ENCODE measurements at regions of chr7 and their contacts with region 1.

Region 1: DNA sequence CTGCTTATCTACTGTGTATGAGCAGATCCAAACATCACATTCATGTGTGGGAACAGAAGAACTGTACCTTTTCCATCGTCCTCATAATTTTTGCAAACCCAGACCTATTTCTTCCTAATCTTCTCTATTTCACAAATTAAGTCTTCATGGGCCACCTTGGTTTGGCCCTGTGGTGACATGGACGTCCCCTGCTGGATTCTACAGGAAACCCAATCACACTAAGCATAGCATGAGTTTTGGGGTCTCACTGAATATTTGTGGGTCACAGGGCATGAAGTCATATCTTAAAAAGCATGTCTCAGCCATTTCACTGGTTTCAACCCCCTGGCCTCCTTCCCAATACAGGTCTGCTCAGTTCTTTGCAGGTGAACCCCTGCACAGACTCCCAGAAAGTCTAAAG is 35.8 kb upstream of the CDCA7L start:
- DNase-seq: no peak
- ATAC-seq: no peak
- H3K4me3 ChIP-seq: no peak overlapping the region
- H3K27ac ChIP-seq: no peak overlapping the region
- H3K4me1 ChIP-seq: no peaks in the 10 kb centered on the region
- H3K27me3 ChIP-seq: peaks cover 1% of the 10 kb centered on the region
- CTCF ChIP-seq: no peak
- POLR2A ChIP-seq: no peak
- RAD21 ChIP-seq: no peak

Region 2: DNA sequence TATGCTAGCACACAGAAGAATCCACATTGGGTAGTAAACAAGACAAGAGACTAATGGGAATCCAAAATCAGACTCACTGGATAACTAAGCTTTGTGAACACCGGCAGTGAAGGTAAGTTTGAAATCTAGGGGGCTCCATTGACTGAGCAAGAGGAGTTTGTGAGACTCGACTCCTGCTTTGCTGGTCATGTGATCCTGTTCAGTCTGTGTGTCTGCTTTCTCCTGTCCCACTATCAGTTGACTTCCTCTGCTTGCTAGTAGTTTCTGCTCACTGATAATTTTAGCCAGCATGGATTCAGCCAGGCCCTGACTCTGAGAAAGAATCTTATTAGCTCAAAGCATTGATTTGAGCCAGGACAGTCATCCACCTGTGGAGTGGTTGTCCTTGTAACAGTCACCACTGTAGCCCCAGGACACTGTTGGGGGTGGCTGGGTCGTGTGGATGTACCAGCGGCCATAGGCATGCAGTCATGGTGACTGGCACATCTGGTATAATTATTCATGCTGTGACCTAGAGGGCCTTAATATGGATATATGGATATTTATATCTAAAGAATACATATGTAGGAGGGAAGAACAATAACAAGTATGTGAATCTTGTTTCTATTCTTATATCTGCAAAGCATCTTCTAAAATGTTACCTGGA is 394.3 kb before region 1 on chr7:
- CTCF ChIA-PET with region 1: interaction called, 10 read pairs
- POLR2A ChIA-PET with region 1: no interaction called
- dilution Hi-C with region 1: no loop called
- in situ Hi-C with region 1: no loop called
- intact Hi-C with region 1: no loop called
- DNase-seq: no peak
- ATAC-seq: no peak
- H3K4me3 ChIP-seq: no peak overlapping the region
- H3K27ac ChIP-seq: no peak overlapping the region
- H3K4me1 ChIP-seq: no peaks in the 10 kb centered on the region
- H3K27me3 ChIP-seq: no peaks in the 10 kb centered on the region
- CTCF ChIP-seq: no peak
- POLR2A ChIP-seq: no peak
- RAD21 ChIP-seq: no peak

Region 3: GRCh38 chr7:21966271-21966670 is 15.3 kb before region 1 on chr7:
- CTCF ChIA-PET with region 1: no interaction called
- POLR2A ChIA-PET with region 1: no interaction called
- dilution Hi-C with region 1: no loop called
- in situ Hi-C with region 1: no loop called
- intact Hi-C with region 1: no loop called
- DNase-seq: no peak
- ATAC-seq: no peak
- H3K4me3 ChIP-seq: no peak overlapping the region
- H3K27ac ChIP-seq: no peak overlapping the region
- H3K4me1 ChIP-seq: no peaks in the 10 kb centered on the region
- H3K27me3 ChIP-seq: peaks cover 2% of the 10 kb centered on the region; the same call in 1 of the 2 replicates
- CTCF ChIP-seq: no peak
- POLR2A ChIP-seq: no peak
- RAD21 ChIP-seq: no peak

Region 4: GRCh38 chr7:22066484-22066883 is 85.0 kb after region 1 on chr7:
- CTCF ChIA-PET with region 1: no interaction called
- POLR2A ChIA-PET with region 1: no interaction called
- dilution Hi-C with region 1: no loop called
- in situ Hi-C with region 1: no loop called
- intact Hi-C with region 1: no loop called
- DNase-seq: no peak
- ATAC-seq: no peak
- H3K4me3 ChIP-seq: no peak overlapping the region
- H3K27ac ChIP-seq: no peak overlapping the region
- H3K4me1 ChIP-seq: no peaks in the 10 kb centered on the region
- H3K27me3 ChIP-seq: no peaks in the 10 kb centered on the region
- CTCF ChIP-seq: no peak
- POLR2A ChIP-seq: no peak
- RAD21 ChIP-seq: no peak

Measured in IMR-90 (cell line).